ENCODE measurements at regions of chr2 and their contacts with region 1.

Region 1: GRCh38 chr2:238203094-238203972 is at the start of gene ILKAP:
- DNase-seq: peak; percentile 43 to 94
- H3K4me3 ChIP-seq: peak within 1 kb of the TSS; percentile 99
- H3K27ac ChIP-seq: peak within 1 kb of the TSS; percentile 88 to 98
- H3K4me1 ChIP-seq: peaks cover 12 to 23% of the 10 kb centered on the region in 2 donors
- H3K27me3 ChIP-seq: no peaks in the 10 kb centered on the region
- CTCF ChIP-seq: peak in 1 of 3 experiments; percentile 16
- total RNA-seq, gene ILKAP: 22.6 TPM

Region 2: GRCh38 chr2:238139196-238140039 is 63.9 kb before region 1 on chr2:
- intact Hi-C with region 1: loop called (anchors 2 kb)
- DNase-seq: no peak
- H3K4me3 ChIP-seq: peak overlapping the region; percentile 54 to 65
- H3K27ac ChIP-seq: peak overlapping the region; percentile 75 to 80
- H3K4me1 ChIP-seq: peaks cover 19 to 52% of the 10 kb centered on the region in 2 donors
- H3K27me3 ChIP-seq: no peaks in the 10 kb centered on the region
- CTCF ChIP-seq: peak; percentile 47 to 69 (median 49)

Region 3: GRCh38 chr2:238169708-238170251 is 33.6 kb before region 1 on chr2:
- intact Hi-C with region 1: loop called (anchors 2 kb)
- DNase-seq: peak in 1 of 2 donors; percentile 88
- H3K4me3 ChIP-seq: no peak overlapping the region
- H3K27ac ChIP-seq: peak overlapping the region; percentile 85 to 91
- H3K4me1 ChIP-seq: peaks cover 8 to 34% of the 10 kb centered on the region in 2 donors
- H3K27me3 ChIP-seq: no peaks in the 10 kb centered on the region
- CTCF ChIP-seq: no peak

Region 4: DNA sequence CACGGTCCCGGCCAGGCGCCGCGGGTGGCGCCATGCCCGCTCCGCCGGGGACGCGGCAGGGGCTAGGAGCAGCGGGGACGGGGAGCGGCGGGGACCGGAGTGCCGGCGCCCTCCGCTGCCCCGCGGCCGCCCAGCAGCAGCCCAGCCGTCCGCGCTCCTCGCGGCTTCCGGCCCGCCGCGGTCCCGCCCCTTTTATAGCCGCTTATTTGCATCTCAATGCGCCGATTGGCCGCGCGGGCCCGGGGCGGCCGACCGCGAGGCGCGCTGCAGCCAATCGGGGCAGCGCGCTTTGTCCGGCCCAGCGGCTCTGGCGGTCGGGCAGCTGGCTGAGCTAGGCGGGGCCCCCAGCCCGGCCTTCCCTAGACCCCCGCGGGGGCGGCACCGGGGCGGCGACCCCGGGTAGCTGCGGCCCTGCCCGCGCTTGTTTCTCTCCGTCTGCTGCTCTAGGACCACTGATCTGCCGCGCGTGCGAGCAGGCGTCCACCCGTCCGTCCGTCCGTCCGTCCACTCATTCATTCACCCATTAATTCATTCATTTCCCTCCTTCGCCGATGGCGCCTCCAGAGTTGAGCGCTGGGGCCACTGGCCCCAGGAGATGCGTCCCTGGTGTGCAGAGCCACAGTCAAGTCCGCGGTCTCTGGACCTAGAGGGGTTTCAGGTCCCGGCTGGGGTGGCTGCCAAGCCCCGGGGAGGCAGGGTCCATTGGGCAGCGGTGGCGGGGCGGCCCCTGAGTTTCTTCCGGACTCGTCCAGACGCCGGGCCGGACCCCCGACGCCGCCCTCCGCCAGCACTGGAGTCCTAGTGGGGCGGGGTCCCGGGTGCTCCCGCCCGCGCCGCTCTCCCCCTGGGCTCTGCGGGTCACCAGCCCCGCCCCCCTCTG is 36.8 kb after region 1 on chr2 and contains the start of gene HES6:
- intact Hi-C with region 1: loop called (anchors 1 kb)
- DNase-seq: peak; percentile 62 to 95
- H3K4me3 ChIP-seq: peak within 1 kb of the TSS; percentile 67 to 92
- H3K27ac ChIP-seq: peak within 1 kb of the TSS; percentile 64 to 79
- H3K4me1 ChIP-seq: peaks cover 0 to 23% of the 10 kb centered on the region in 2 donors
- H3K27me3 ChIP-seq: peaks cover 3% of the 10 kb centered on the region
- CTCF ChIP-seq: no peak
- total RNA-seq, gene HES6: 117 TPM

Region 5: DNA sequence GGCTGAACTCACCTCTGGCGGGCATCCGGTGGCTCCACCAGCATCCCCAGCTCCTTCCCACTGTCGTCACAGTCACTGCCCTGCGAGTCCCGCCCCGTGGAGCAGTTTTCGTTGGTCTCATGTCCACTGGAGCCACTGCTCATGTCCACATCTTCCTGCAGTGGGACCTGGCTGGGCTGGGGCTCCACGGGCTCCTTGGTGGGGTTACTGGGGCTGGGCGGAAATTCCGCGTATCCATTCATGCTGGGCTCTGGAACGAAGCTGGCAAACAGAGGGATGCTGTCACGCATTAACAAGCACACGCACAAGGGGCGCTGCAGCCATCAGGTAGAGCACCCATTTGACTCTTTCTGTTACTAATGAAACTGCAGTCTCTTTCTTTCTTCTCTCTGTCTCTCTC is 74.4 kb after region 1 on chr2:
- intact Hi-C with region 1: no loop called
- DNase-seq: no peak
- H3K4me3 ChIP-seq: no peak overlapping the region
- H3K27ac ChIP-seq: no peak overlapping the region
- H3K4me1 ChIP-seq: no peaks in the 10 kb centered on the region
- H3K27me3 ChIP-seq: no peaks in the 10 kb centered on the region
- CTCF ChIP-seq: no peak

Region 6: DNA sequence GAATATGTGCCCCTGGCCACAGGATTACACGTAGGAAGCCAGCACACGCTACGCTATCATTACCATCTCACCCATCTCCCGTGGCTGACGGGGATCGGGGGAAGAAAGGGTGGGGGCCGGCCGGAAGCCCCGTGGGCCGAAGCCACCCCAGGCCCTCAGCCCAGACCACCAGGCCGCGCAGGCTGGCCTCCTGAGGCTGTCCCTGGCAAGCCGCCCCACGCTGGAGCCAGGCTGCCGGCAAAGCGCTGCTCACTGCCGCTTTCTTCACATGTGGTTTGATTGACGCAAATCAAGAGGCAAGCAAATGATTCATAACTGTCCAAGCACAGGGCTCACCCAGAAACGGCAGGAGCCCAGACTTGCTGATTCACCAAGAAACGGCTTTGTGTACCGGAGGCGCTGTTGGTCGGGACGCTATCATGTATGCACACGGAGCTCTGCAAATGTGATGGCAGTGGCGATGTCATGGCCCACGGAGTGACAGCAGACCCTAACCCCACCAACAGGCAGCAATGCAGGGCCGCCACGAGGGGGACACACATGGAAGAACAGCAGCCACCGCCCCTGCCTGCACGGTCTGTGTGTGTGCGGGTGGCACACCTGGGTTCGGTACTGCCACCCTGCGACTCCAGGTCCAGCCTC is 1071.8 kb after region 1 on chr2:
- intact Hi-C with region 1: loop called (anchors 5 kb)
- DNase-seq: peak; percentile 82 to 96
- H3K4me3 ChIP-seq: peak overlapping the region; percentile 18 to 50
- H3K27ac ChIP-seq: peak overlapping the region; percentile 68 to 81
- H3K4me1 ChIP-seq: peaks cover 13 to 32% of the 10 kb centered on the region in 2 donors
- H3K27me3 ChIP-seq: no peaks in the 10 kb centered on the region
- CTCF ChIP-seq: peak in 1 of 3 experiments; percentile 14